PC-9 (cell line): ENCODE measurements at regions of chr11 and their contacts with region 1.

Region 1: GRCh38 chr11:71246554-71246953 is 5.8 kb downstream of the SHANK2 start:
- DNase-seq: no peak
- H3K4me3 ChIP-seq: no peak overlapping the region
- H3K27ac ChIP-seq: no peak overlapping the region
- H3K4me1 ChIP-seq: peaks cover 30% of the 10 kb centered on the region
- H3K27me3 ChIP-seq: no peaks in the 10 kb centered on the region
- CTCF ChIP-seq: no peak

Region 2: GRCh38 chr11:71459096-71459766 is 212.7 kb after region 1 on chr11:
- CTCF ChIA-PET with region 1: interaction called, 14 read pairs
- POLR2A ChIA-PET with region 1: no interaction called
- intact Hi-C with region 1: no loop called
- DNase-seq: no peak
- H3K4me3 ChIP-seq: no peak overlapping the region
- H3K27ac ChIP-seq: no peak overlapping the region
- H3K4me1 ChIP-seq: peaks cover 4% of the 10 kb centered on the region
- H3K27me3 ChIP-seq: no peaks in the 10 kb centered on the region
- CTCF ChIP-seq: no peak

Region 3: DNA sequence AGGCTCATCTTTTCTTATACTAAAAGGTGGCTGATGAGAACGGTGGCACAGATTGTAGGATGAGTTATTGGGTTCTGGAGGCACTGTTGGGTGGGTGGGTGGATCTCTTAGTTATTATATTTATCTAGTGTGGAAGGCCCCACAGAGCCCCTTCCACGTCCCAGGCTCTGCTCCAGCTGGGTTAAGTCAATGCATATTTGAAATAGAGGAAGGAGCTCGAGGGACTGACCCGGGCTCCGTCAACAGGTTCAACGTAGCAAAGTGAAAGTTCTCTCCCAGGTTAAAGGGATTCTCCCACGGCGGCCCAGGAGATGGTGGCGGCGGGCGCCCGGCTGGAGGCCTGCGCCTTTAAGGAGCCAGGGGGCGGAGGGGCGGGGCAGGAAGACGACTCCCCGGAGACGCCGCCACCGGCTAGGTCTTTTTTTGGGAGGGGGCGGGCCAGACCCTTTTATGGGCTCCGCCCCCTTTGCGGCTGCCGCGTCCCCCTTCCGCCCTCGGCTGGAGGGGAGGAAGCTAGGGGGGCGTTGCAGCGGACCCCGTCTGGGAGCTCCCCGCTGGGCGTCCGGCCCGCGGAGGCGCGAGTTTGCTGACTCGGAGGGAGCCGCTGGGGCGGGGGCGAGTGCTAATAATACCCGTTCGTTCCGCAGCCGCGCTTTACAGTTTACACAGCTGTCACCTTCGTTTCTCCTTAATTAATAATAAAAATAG is 976.5 kb after region 1 on chr11:
- CTCF ChIA-PET with region 1: no interaction called
- POLR2A ChIA-PET with region 1: no interaction called
- intact Hi-C with region 1: no loop called
- DNase-seq: peak; percentile 84 to 97
- H3K4me3 ChIP-seq: peak overlapping the region; percentile 97
- H3K27ac ChIP-seq: peak overlapping the region; percentile 50
- H3K4me1 ChIP-seq: peaks cover 23% of the 10 kb centered on the region
- H3K27me3 ChIP-seq: no peaks in the 10 kb centered on the region
- CTCF ChIP-seq: peak; percentile 68; the same call in 1 of the 2 replicates